ENCODE measurements at regions of chr9 and their contacts with region 1.

Region 1: GRCh38 chr9:127444921-127445850 is 6.0 kb downstream of the RPL12 start:
- H3K4me3 ChIP-seq: no peak overlapping the region
- H3K27ac ChIP-seq: no peak overlapping the region
- H3K4me1 ChIP-seq: no peaks in the 10 kb centered on the region
- CTCF ChIP-seq: no peak

Region 2: DNA sequence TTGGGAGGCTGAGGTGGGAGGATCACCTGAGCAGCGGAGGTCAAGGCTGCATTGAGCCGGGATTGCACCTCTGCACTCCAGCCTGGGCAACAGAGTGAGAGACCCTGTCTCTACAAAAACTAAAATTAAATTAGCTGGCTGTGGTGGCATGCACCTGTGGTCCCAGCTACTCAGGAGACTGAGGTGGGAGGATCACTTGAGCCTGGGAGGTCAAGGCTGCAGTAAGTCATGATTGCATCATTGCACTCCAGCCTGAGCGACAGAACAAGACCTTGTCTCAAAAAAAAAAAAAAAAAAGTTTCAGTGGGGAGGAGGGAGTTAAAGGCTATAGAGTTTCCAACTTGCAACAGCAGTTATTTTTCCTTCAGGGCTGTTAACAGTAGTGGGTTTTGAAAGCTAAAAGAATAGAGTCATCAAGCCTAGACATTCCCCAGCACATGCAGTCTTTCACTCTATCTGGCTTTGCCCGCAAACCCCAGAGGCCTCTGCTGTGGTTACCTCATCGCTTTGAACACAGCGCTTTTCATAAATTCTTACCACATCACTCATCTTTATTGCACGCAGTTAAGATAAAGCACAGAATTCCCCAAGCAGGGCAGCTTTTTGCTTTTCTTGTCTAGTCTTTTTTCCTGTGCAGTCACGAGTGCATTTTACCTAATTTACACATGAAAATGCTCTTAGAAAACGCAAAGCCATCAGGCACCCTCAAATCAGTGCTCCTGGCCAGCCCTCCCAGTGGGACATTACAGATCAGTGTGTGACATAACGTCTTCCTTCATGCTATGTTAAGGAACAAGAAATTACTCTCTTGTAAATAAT is 56.9 kb before region 1 on chr9:
- CTCF ChIA-PET with region 1: no interaction called
- POLR2A ChIA-PET with region 1: interaction called, 10 read pairs
- H3K4me3 ChIP-seq: no peak overlapping the region
- H3K27ac ChIP-seq: peak overlapping the region; percentile 53
- H3K4me1 ChIP-seq: peaks cover 12% of the 10 kb centered on the region
- CTCF ChIP-seq: no peak

Region 3: DNA sequence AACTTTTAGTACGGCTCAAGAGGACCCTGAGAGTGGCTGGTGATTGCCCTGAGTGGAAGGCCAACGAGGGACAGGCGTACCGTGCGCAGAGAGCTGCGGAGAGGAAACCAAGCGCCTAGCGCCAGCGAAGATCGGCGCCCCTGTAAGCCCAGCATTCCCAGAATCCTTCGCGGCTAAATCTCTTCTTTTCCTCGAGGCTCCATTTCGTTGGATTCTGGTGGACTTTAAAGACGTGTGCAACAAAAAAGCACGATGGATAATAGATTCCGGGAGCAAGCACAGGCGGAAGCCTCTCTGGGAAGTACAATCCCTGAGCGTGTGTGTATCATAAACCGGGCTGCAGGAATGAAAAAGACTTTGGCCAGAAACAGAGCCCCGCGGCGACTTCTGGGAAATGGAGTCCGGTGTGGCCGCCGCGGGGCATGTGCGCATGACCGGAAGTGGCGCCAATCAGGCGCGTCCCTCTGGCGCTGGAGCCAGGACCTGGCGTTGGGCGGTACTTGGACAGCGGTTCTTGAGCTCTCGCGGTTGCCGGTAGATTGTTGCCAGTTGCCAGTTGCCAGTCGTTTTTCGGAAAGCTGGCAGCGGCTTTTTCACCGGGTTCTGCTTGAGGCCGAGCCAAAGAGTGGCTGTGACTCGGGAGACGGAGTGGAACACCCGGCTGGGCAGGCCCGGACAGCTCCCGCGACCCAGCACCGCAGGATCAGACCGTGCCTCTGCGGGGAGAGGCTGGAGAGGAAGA is 21.1 kb before region 1 on chr9 and contains the start of gene ZNF79:
- CTCF ChIA-PET with region 1: interaction called, 3 read pairs
- POLR2A ChIA-PET with region 1: interaction called, 46 read pairs
- H3K4me3 ChIP-seq: peak within 1 kb of the TSS; percentile 64
- H3K27ac ChIP-seq: peak within 1 kb of the TSS; percentile 80
- H3K4me1 ChIP-seq: 0 out of 2 replicates have a peak, but pooled peaks cover 5% of the 10 kb centered on the region
- CTCF ChIP-seq: no peak

Region 4: DNA sequence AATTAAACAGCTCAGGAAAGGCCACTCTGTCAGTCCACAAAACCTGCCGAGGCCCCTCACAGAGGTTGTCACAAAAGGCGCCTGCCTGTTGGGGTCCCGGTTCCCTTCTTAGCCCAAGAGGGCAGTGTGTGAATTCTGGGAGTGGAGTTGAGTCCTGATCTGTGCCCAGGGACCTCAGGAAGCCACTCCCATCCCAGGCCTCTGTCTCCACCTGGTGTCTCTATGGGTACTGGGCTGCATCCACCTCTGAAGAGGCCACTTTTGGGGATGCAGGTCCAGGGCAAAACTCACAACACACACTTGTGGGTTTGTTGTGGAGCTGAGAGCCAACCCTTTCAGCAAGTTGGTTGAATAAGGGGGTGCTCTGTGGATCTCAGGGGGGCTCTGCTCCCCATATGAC is 92.6 kb after region 1 on chr9:
- CTCF ChIA-PET with region 1: no interaction called
- POLR2A ChIA-PET with region 1: no interaction called
- H3K4me3 ChIP-seq: no peak overlapping the region
- H3K27ac ChIP-seq: no peak overlapping the region
- H3K4me1 ChIP-seq: no peaks in the 10 kb centered on the region
- CTCF ChIP-seq: no peak

Region 5: DNA sequence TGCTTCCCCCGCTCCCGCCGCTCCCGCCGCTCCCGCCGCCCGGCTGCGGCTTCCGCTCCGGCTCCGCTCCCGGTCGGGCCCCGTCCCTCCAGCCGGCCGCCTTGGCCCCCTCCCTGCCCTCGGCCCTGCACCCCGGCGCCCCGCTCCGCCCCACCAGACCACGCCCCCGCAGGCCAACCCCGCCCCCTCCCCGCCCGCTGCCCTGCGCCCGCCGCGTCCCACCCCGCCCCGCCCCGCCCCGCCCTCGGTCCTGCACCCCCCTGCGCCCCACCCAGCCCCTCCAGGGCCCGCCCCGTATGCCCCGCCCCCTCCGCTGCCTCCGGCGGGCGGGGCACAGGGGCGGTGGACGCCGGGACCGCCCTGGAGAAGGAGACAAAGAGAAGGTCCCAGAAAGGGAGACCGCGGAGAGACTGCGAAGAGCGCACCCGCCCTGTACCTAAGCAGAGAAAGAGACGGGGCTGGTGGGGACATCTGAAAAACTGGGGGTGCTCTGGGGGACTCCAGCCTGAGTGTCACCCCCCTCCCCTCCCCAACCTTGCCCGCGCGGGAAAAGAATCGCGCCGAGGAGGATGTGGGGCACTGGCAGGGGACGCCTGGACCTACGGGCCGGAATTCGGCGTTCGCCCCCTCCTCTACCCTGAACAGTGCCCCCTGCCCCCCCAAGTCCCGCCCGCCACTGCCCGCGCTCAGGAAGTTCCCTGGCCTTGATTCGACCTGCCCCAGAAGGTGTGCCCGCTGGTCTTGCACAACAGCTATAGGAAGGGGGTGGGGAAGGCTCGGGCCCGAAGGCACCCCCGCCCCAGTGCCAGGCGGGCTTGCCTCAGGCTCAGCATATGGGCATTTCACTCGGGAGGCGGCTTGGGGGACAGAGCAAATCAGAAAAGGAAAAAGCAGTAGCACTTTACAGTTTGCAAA is 124.0 kb after region 1 on chr9:
- CTCF ChIA-PET with region 1: no interaction called
- POLR2A ChIA-PET with region 1: no interaction called
- H3K4me3 ChIP-seq: peak overlapping the region; percentile 54
- H3K27ac ChIP-seq: peak overlapping the region; percentile 68; the same call in 1 of the 2 replicates
- H3K4me1 ChIP-seq: peaks cover 9% of the 10 kb centered on the region; the same call in 1 of the 2 replicates
- CTCF ChIP-seq: no peak